Left ventricle myocardium superior (tissue), 1 donor: ENCODE measurements at regions of chr1 and their contacts with region 1.

Region 1: GRCh38 chr1:42971841-42972291 is 13.2 kb upstream of the SLC2A1 start:
- DNase-seq: no peak
- ATAC-seq: no peak

Region 2: GRCh38 chr1:42070996-42071395 is 900.9 kb before region 1 on chr1:
- intact Hi-C with region 1: loop called (anchors 10 kb)
- DNase-seq: no peak
- ATAC-seq: no peak

Region 3: GRCh38 chr1:42801832-42802473 is 169.9 kb before region 1 on chr1:
- intact Hi-C with region 1: no loop called
- DNase-seq: no peak
- ATAC-seq: no peak

Region 4: DNA sequence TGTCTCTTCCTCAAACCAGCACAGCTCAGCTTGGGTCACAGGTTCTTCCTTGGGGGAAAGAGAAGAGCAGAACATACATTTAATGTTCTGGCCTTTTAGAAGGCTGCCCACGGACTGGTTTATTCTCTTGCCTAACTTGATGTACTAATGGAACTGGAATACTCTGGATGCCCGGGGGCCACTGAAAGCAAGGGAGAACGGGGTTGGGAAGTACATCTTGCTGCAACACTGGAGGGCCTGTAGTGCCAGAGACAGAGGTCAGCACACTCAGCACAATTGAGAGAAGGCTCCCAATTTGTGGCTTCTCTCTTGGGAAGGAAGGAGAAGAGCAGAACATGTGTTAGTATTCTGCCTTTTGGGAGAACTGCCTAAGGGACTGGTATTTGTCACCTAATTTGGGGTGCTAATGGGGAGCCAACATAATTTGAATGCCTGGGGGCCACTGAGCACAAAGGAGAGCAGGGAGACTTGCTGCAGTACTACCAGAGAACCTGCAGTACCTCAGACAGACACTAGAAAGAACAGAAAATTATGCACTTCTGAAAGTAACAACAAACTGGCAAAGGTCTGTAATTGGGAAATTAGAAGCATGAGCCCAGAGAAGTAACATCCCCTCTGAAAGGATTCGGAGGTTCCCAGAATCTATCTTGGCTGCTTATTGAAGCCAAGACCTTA is 111.4 kb before region 1 on chr1:
- intact Hi-C with region 1: no loop called
- DNase-seq: no peak
- ATAC-seq: no peak